ENCODE measurements at regions of chr16 and their contacts with region 1.

Region 1: DNA sequence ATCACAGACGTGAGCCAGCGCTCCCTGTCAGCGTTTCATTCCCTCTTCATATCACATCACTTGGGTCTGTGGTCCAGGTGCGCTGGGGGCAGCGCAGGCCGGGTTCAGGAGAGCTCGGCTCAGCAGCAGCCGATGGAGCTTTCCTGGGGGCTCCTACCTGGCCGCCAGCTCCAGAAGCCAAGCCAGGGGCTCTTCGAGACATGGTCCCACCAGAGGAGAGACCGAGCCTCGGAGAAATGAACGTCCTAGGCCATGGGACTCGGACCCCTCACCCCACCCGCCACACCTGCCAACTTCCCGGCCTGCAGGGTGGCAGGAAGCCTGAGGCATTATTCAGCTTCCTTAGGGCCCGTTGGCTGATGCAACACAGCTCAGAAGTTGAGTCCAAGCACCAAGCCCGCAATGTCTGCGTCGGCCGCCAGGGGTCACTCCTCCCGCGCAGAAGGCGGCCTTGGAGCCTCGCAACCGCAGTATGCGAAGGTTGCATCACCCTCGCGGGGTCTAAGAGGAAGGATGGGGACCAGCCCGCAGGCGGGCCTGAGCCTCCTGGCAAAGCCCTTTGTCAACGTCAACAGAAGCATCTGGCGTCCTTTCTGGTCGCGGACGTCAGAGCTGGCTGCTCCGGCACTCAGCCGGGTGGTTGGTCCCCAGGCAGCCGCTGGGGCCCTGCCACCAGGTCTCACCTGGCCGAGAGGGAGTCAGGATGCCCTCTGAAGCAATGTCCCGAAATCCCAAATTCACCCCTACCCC is 13.2 kb upstream of the KLHDC4 start:
- DNase-seq: peak; percentile 98
- ATAC-seq: peak; percentile 70
- H3K4me3 Mint-ChIP-seq: peak overlapping the region; percentile 82
- H3K27ac Mint-ChIP-seq: peak overlapping the region; percentile 99
- H3K4me1 Mint-ChIP-seq: peaks cover 54% of the 10 kb centered on the region
- H3K27me3 Mint-ChIP-seq: no peaks in the 10 kb centered on the region

Region 2: GRCh38 chr16:87492721-87493607 is 286.0 kb before region 1 on chr16 and contains the start of gene ZCCHC14:
- CTCF ChIA-PET with region 1: no interaction called
- POLR2A ChIA-PET with region 1: no interaction called
- intact Hi-C with region 1: loop called in 1 of 2 experiments (anchors 1 kb)
- DNase-seq: peak; percentile 100
- ATAC-seq: peak; percentile 94
- H3K4me3 Mint-ChIP-seq: peak within 1 kb of the TSS; percentile 83
- H3K27ac Mint-ChIP-seq: peak within 1 kb of the TSS; percentile 85
- H3K4me1 Mint-ChIP-seq: peaks cover 48% of the 10 kb centered on the region
- H3K27me3 Mint-ChIP-seq: no peaks in the 10 kb centered on the region
- total RNA-seq, gene ZCCHC14: 10.1 to 12.9 TPM

Region 3: GRCh38 chr16:87790278-87791032 is 11.4 kb after region 1 on chr16:
- CTCF ChIA-PET with region 1: interaction called, 30 read pairs
- POLR2A ChIA-PET with region 1: no interaction called
- intact Hi-C with region 1: no loop called
- DNase-seq: no peak
- ATAC-seq: no peak
- H3K4me3 Mint-ChIP-seq: no peak overlapping the region
- H3K27ac Mint-ChIP-seq: no peak overlapping the region
- H3K4me1 Mint-ChIP-seq: no peaks in the 10 kb centered on the region
- H3K27me3 Mint-ChIP-seq: no peaks in the 10 kb centered on the region

Region 4: DNA sequence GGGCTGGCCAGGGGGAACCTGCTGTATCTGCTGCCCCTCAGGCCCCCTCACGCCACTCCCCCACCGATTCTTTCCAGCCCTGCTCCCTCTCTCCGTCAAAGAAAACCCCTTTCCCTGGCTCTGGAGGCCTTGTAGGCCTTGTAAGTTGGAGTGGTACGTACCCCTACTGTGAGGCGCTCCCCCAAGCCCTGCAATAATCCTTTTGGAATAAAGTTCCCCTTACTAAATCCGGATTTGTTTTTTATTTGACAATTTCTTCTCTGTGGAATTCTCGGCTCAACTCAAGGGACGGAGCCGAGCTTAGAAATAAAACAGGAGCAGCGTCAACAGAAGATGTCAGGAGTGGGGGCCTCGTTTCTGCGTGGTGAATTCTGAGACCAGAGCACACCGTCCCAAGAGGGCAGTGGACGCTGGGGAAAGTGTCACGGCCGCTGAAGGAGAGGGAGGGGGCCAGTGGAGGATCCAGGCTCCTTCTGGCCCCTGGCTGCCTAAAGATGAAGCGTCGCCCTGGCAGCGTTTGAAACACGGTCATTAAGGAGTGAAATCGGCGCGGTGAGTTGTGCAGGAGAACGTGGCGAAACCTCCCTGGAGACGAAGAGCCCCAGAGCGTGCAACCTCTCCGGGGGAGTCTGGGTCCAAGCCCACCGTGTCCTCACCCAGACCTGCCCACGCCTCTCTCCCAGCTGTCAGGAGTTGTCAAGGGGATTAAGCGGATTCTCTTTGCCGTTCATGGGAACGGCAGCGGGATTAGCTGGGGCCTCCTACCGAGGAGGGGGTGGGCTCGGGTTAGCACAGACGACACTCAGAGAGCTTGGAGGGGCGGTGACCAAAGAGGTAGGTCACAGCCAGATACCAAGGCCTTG is 43.3 kb after region 1 on chr16:
- CTCF ChIA-PET with region 1: interaction called, 7 read pairs
- POLR2A ChIA-PET with region 1: interaction called, 5 read pairs
- intact Hi-C with region 1: loop called in 1 of 2 experiments (anchors 5 kb)
- DNase-seq: no peak
- ATAC-seq: no peak
- H3K4me3 Mint-ChIP-seq: no peak overlapping the region
- H3K27ac Mint-ChIP-seq: no peak overlapping the region
- H3K4me1 Mint-ChIP-seq: peaks cover 7% of the 10 kb centered on the region
- H3K27me3 Mint-ChIP-seq: no peaks in the 10 kb centered on the region

Region 5: DNA sequence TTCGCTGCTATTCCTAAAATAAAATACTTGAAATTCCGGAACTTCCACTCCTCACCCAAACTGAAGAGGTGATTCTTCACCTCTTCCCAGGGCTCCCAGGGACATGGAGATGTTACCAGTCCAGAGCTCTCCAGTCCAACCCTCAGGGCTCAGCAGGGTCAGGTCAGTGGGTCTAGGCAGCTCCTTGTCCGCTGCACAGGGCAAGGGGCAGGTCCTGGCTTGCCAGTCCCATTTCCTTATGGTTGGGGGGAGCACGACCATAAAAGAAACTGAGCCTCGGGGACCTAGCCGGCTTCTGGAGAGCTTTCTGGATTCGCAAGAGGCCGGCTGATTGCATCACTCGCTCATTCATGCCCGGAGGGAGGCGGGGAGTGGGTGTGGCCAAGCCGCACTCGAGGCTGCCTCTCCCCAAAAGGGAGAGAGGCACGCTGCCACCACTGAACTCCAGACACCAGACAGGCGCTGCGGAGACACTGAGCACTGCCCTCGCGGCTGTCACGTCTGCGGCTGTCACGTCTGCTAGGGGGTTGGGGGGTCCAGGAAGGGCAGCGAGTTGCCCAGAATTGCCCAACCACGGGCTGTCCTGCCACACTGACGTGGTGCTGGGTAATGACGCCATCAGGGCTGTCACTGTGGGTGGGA is 74.5 kb after region 1 on chr16:
- CTCF ChIA-PET with region 1: interaction called, 35 read pairs
- POLR2A ChIA-PET with region 1: interaction called, 6 read pairs
- intact Hi-C with region 1: loop called (anchors 1 to 5 kb)
- DNase-seq: peak; percentile 97
- ATAC-seq: peak; percentile 76
- H3K4me3 Mint-ChIP-seq: peak overlapping the region; percentile 55
- H3K27ac Mint-ChIP-seq: peak overlapping the region; percentile 92
- H3K4me1 Mint-ChIP-seq: peaks cover 61% of the 10 kb centered on the region
- H3K27me3 Mint-ChIP-seq: no peaks in the 10 kb centered on the region

Region 6: DNA sequence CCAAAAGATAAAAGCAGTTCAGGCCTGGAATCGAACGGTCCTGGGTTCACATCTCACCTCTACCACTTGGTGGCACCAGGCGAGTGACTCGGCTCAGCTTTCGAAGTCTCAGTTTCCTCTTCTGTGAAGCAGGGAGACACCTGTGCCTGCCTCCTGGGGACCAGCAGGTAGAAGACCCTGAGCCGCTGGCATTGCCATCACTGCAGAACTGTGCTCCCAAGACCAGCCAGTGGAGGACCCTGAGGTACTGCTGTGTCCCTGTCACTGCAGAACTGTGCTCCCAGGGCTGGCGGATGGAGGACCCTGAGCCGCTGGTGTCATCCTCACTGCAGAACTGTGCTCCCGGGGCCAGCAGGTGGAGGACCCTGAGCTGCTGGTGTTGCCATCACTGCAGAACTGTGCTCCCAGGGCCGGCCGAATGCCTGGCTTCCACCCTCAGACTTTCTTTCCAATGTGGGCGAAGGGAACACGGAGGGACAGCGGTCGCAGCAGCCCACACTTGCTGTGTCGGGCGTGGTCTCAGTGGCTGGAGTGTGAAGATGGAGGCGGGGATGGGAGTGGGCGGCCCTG is 99.0 kb after region 1 on chr16:
- CTCF ChIA-PET with region 1: interaction called, 86 read pairs
- POLR2A ChIA-PET with region 1: interaction called, 5 read pairs
- intact Hi-C with region 1: loop called in 1 of 2 experiments (anchors 1 kb)
- DNase-seq: peak; percentile 63
- ATAC-seq: peak; percentile 14
- H3K4me3 Mint-ChIP-seq: no peak overlapping the region
- H3K27ac Mint-ChIP-seq: no peak overlapping the region
- H3K4me1 Mint-ChIP-seq: peaks cover 38% of the 10 kb centered on the region
- H3K27me3 Mint-ChIP-seq: no peaks in the 10 kb centered on the region

Region 7: GRCh38 chr16:87950765-87951549 is 172.0 kb after region 1 on chr16 and contains the start of gene BANP:
- CTCF ChIA-PET with region 1: interaction called, 5 read pairs
- POLR2A ChIA-PET with region 1: interaction called, 5 read pairs
- intact Hi-C with region 1: loop called (anchors 1 kb)
- DNase-seq: peak; percentile 98
- ATAC-seq: peak; percentile 96
- H3K4me3 Mint-ChIP-seq: peak within 1 kb of the TSS; percentile 93
- H3K27ac Mint-ChIP-seq: peak within 1 kb of the TSS; percentile 100
- H3K4me1 Mint-ChIP-seq: peaks cover 47% of the 10 kb centered on the region
- H3K27me3 Mint-ChIP-seq: no peaks in the 10 kb centered on the region
- total RNA-seq, gene BANP: 35.2 to 36.1 TPM